ENCODE measurements at regions of chr16 and their contacts with region 1.

Region 1: DNA sequence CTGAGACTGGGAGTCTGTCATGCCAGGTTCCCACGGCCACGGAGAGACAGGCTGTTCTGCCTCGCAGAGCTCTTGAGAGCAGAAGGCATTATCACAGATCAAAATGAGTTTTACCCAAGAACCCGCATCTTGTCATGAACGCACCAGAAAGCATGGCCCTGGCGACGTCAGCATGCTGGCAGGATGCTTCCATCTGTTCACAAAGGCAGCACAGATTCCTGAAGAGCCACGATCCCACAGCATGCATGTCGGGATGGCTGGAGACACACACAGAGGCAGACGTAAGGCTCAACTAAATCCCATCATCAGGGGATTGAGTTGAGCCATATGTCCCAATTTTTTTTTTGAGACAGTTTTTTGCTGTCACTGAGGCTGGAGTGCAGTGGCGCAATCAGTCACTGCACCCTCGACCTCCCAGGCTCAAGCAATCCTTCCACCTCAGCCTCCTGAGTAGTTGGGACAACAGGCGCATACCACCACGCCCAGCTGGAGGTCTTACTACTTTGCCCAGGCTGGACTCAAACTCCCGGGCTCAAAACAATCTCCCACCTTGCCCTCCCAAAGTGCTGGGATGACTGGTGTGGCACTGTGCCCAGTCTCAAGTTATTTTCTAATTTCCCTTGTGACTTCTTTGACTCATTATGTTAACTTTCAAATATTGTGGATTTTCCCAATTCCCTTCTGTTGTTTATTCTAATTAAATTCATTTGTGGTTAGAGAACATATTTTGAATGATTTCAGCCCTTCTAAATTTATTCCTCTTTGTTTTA is 11.1 kb downstream of the FANCA start:
- H3K4me3 ChIP-seq: no peak overlapping the region
- H3K27ac ChIP-seq: no peak overlapping the region
- H3K4me1 ChIP-seq: no peaks in the 10 kb centered on the region
- CTCF ChIP-seq: no peak

Region 2: GRCh38 chr16:89791278-89791995 is 13.9 kb before region 1 on chr16:
- CTCF ChIA-PET with region 1: interaction called, 14 read pairs
- POLR2A ChIA-PET with region 1: interaction called, 6 read pairs
- H3K4me3 ChIP-seq: no peak overlapping the region
- H3K27ac ChIP-seq: no peak overlapping the region
- H3K4me1 ChIP-seq: no peaks in the 10 kb centered on the region
- CTCF ChIP-seq: no peak

Region 3: DNA sequence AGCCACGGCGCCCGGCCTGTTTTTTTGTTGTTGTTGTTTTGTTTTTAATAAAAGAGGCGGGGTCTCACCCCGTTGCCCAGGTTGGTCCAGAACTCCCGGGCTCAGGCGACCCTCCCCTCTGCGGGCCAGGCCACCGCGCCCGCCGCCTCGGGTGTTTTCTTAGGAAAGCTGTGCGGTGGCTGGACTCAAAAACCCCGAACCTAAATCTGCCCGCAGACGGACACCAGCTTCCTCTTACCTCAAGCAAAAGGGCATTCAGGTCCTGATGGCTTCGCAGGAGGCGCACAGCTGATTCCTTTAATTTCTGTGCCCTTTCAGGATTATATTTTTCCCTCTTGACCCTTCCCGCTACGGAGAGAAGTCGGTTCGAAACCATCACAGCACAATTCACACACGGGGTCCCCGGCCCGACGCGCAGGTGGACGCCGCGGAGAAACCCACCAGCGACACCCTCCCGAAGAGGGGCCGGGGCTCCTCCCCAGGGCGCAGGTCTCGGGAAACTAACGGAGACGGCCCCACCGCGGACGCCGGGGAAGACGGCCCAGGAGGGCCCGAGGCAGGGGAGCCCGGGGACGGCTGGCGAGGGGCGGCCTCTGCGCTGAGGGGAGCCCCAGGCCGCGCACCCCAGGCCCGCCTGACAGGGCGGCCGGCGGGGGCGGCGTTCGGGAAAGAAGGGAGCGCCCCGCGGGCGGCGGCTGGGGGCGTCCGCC is 10.5 kb after region 1 on chr16:
- CTCF ChIA-PET with region 1: interaction called, 7 read pairs
- POLR2A ChIA-PET with region 1: interaction called, 10 read pairs
- H3K4me3 ChIP-seq: peak overlapping the region; percentile 73
- H3K27ac ChIP-seq: peak overlapping the region; percentile 89
- H3K4me1 ChIP-seq: no peaks in the 10 kb centered on the region
- CTCF ChIP-seq: no peak

Region 4: GRCh38 chr16:89860747-89861304 is 55.5 kb after region 1 on chr16:
- CTCF ChIA-PET with region 1: interaction called, 13 read pairs
- POLR2A ChIA-PET with region 1: no interaction called
- H3K4me3 ChIP-seq: no peak overlapping the region
- H3K27ac ChIP-seq: no peak overlapping the region
- H3K4me1 ChIP-seq: no peaks in the 10 kb centered on the region
- CTCF ChIP-seq: peak; percentile 95

Measured in HEK293 (cell line).